Caco-2 (cell line): ENCODE measurements at regions of chr18 and their contacts with region 1.

Region 1: DNA sequence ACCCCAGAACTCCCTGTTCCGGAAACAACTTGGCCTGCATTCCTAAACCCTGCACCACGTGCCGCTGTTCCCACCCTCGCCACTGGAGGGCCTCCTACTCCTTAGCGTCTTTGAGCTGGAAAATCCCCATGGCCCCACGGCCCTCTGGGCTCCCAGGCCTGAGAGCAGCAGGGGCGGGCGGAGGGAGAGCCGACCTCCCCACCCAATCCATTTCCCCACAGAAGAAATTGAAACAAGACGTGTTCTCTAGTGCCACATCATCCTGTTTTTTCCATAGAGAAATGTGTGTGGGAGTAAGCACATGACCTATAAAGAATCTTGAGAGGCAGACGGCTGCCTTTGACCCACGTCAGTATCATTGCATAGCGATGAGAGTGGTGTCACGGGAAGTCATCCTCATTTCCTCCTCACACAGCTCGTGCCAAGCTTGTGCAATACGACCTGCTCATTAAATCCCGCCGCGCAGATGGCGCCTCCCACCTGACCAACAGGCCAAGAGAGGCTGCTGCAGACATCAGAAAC is 79.2 kb downstream of the LAMA1 start:
- DNase-seq: peak; percentile 93 to 94
- H3K4me3 ChIP-seq: peak overlapping the region; percentile 31
- H3K4me3 Mint-ChIP-seq: peak overlapping the region; percentile 55
- H3K27ac Mint-ChIP-seq: peak overlapping the region; percentile 85
- H3K4me1 ChIP-seq: peaks cover 53% of the 10 kb centered on the region
- H3K4me1 Mint-ChIP-seq: peaks cover 35% of the 10 kb centered on the region
- H3K27me3 ChIP-seq: no peaks in the 10 kb centered on the region
- H3K27me3 Mint-ChIP-seq: no peaks in the 10 kb centered on the region
- CTCF ChIP-seq: peak; percentile 82 to 89

Region 2: GRCh38 chr18:6885992-6886796 is 152.2 kb before region 1 on chr18:
- CTCF ChIA-PET with region 1: no interaction called
- POLR2A ChIA-PET with region 1: no interaction called
- intact Hi-C with region 1: no loop called
- DNase-seq: peak in 1 of 2 experiments; percentile 68
- H3K4me3 ChIP-seq: no peak overlapping the region
- H3K4me3 Mint-ChIP-seq: no peak overlapping the region
- H3K27ac Mint-ChIP-seq: no peak overlapping the region
- H3K4me1 ChIP-seq: no peaks in the 10 kb centered on the region
- H3K4me1 Mint-ChIP-seq: no peaks in the 10 kb centered on the region
- H3K27me3 ChIP-seq: no peaks in the 10 kb centered on the region
- H3K27me3 Mint-ChIP-seq: no peaks in the 10 kb centered on the region
- CTCF ChIP-seq: peak; percentile 67 to 78

Region 3: DNA sequence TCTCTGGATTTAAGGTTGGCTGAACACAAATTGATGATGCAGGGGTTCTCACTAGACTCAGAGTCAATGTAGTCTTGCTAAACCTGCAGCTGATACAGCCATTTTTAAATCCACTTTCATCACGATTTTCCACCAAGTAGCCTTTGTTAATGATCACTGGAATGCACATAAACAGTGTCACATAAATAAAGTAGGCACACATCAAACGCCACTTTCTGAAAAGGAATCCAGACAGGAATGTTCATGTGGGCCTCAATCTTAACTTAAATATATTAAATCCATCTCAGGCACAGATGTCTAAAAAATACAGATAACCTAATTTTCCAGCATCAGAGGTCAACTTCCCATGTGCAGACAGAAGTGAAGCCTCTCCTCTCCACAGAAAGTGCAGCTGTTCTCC is 20.9 kb after region 1 on chr18:
- CTCF ChIA-PET with region 1: interaction called, 6 read pairs
- POLR2A ChIA-PET with region 1: interaction called, 7 read pairs
- intact Hi-C with region 1: loop called (anchors 1 kb)
- DNase-seq: peak in 1 of 2 experiments; percentile 56
- H3K4me3 ChIP-seq: no peak overlapping the region
- H3K4me3 Mint-ChIP-seq: peak overlapping the region; percentile 38
- H3K27ac Mint-ChIP-seq: peak overlapping the region; percentile 73
- H3K4me1 ChIP-seq: peaks cover 63% of the 10 kb centered on the region
- H3K4me1 Mint-ChIP-seq: peaks cover 44% of the 10 kb centered on the region
- H3K27me3 ChIP-seq: no peaks in the 10 kb centered on the region
- H3K27me3 Mint-ChIP-seq: no peaks in the 10 kb centered on the region
- CTCF ChIP-seq: no peak

Region 4: DNA sequence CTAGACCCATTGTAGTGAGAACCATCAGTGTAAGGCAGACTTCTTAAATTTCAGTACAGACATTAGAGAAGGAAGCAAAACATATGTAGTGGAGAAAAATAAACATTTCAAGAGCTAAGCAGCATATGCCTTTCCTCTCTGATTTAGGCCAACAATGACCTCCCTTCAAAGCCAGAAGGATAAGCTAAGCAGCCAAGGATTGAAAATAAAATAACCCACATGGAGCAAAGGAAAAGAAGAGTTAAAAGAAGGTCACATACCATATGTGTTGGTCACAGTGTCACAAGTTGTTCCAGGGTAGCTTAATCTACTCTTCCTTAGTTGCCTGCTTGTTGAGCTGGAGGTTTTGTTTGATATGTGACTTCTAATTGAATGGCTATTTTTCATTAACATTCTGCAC is 94.8 kb after region 1 on chr18:
- CTCF ChIA-PET with region 1: interaction called, 6 read pairs
- POLR2A ChIA-PET with region 1: interaction called, 8 read pairs
- intact Hi-C with region 1: loop called (anchors 1 kb)
- DNase-seq: peak in 1 of 2 experiments; percentile 68
- H3K4me3 ChIP-seq: no peak overlapping the region
- H3K4me3 Mint-ChIP-seq: peak overlapping the region; percentile 67
- H3K27ac Mint-ChIP-seq: peak overlapping the region; percentile 72
- H3K4me1 ChIP-seq: peaks cover 50% of the 10 kb centered on the region
- H3K4me1 Mint-ChIP-seq: peaks cover 44% of the 10 kb centered on the region
- H3K27me3 ChIP-seq: no peaks in the 10 kb centered on the region
- H3K27me3 Mint-ChIP-seq: no peaks in the 10 kb centered on the region
- CTCF ChIP-seq: no peak

Region 5: DNA sequence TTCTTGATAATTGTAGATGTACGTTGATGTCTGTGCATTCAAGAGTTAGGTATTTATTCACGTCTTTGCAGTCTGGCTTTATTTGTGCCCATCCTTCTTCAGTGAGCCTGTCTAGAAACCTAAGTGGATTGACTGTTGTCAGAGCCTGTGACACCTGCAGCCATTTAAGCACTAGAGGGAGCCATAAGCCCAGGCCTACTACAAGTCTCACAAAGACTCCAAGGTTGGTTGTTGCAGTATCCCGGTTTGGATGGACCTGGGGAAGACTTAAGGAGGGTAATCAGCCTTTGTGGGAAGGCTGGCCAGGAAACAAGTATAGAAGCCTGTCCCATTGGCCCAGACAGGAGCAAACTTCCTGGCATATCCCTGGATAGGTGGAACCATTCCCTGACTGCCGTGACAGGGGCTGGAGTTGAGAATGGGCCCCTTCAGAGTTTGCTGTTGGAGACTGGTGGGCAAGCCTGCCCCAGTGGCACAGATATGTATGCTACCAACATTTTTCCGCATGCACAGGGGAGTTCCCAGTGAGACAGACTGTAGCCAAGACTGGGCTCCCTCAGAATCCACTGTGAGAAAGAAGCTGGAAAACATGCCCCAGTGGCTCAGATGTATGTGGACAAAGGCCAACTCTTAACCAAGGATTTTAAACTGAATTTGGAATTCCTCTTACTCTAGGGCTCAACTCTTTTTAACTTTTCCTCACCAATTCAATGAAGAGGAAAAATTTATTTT is 183.2 kb after region 1 on chr18:
- CTCF ChIA-PET with region 1: no interaction called
- POLR2A ChIA-PET with region 1: no interaction called
- intact Hi-C with region 1: no loop called
- DNase-seq: peak; percentile 75 to 77
- H3K4me3 ChIP-seq: no peak overlapping the region
- H3K4me3 Mint-ChIP-seq: no peak overlapping the region
- H3K27ac Mint-ChIP-seq: no peak overlapping the region
- H3K4me1 ChIP-seq: no peaks in the 10 kb centered on the region
- H3K4me1 Mint-ChIP-seq: no peaks in the 10 kb centered on the region
- H3K27me3 ChIP-seq: no peaks in the 10 kb centered on the region
- H3K27me3 Mint-ChIP-seq: peaks cover 6% of the 10 kb centered on the region
- CTCF ChIP-seq: peak; percentile 65 to 84